B cell (primary cell): ENCODE measurements at regions of chr6 and their contacts with region 1.

Region 1: DNA sequence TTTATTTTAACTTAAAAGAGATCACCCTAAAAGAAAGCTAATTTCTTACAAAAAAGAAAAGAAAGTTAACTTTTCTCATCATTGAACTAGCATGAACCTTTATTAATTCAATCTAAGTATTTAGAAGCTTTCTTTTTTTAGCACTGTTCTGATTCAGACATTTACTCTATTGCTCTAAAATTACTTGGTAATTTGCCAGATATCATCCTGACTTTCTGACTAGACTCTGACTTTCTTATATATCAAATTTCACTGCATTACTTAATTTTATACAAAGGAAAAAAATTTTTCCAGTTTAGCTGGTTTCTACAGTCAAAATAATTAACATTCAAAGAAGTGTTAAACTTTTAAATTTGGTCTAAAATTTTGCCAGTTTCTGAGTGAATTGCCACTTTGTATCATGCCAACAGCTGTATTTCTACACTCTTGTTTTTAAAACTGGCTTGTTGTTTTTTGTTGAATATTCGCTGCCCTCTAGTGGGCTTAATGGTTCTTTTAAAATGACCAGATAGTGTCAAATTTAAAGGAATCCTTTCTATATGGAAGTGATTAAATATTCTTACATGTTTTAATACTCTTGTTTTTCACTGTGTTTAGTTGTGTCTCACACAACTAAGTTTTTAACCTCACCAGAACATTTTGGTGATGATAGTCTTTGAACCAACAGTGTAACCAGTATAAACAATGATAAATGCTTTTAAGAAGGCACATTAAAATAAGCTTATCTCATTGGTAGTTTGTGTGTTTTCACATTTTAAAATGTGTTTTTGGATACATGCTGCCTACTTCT is 102.0 kb downstream of the POPDC3 start:
- DNase-seq: no peak
- ATAC-seq: no peak
- H3K4me3 ChIP-seq: no peak overlapping the region
- H3K4me3 Mint-ChIP-seq: no peak overlapping the region
- H3K27ac ChIP-seq: no peak overlapping the region
- H3K27ac Mint-ChIP-seq: no peak overlapping the region
- H3K4me1 ChIP-seq: no peaks in the 10 kb centered on the region
- H3K4me1 Mint-ChIP-seq: no peaks in the 10 kb centered on the region
- H3K27me3 ChIP-seq: no peaks in the 10 kb centered on the region
- H3K27me3 Mint-ChIP-seq: peaks cover 14% of the 10 kb centered on the region
- CTCF ChIP-seq: peak; percentile 34

Region 2: GRCh38 chr6:104789770-104790190 is 288.0 kb before region 1 on chr6:
- CTCF ChIA-PET with region 1: interaction called, 7 read pairs
- POLR2A ChIA-PET with region 1: no interaction called
- intact Hi-C with region 1: loop called (anchors 10 kb)
- DNase-seq: peak; percentile 2
- ATAC-seq: no peak
- H3K4me3 ChIP-seq: no peak overlapping the region
- H3K4me3 Mint-ChIP-seq: no peak overlapping the region
- H3K27ac ChIP-seq: no peak overlapping the region
- H3K27ac Mint-ChIP-seq: no peak overlapping the region
- H3K4me1 ChIP-seq: no peaks in the 10 kb centered on the region
- H3K4me1 Mint-ChIP-seq: peaks cover 2% of the 10 kb centered on the region
- H3K27me3 ChIP-seq: no peaks in the 10 kb centered on the region
- H3K27me3 Mint-ChIP-seq: no peaks in the 10 kb centered on the region
- CTCF ChIP-seq: peak; percentile 15